ENCODE measurements at regions of chr3 and their contacts with region 1.

Region 1: DNA sequence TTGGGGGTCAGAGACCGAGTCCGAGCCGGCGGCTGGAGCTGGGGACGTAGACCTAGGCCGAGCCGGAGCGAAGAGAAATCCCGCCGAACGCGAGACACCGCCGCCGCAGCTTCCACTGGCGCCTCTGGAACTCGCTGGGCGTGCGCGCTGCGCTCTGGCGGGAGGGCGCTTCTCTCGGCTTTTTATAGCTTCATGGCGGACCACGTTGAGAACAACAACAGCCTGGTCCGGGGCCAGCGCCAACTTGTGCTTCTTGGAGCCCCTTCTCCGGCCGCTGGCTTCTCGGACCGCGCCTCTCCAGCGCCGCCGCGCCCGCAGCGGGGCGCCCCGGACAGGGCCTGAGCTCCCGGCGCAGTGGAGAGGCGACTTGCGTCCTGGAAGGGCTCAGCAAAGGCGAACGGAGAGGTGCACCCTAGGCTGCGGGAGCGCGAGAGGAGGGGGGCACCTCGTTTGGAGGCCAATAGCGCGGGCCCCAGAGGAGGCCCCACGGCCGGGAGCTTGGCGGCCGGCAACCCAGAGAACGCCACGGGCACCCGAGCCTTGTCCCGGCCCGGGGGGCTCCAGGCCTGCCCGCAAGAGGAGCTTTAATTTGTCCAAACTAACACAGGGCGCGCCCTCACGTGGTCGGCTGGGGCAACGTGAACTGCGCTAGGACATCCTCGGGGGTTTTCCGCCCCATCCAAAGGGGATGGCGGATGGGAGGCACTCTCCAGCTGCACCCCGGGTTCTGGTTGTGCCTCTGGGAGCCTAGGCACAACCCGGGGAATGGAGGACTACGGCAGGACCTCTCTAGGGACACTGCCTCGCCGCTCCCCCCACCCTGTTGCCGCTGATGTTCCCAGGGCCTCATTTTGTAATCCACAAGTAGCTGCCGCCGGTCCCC is 37.7 kb downstream of the HMCES start:
- DNase-seq: peak; percentile 79 to 96 (median 89)
- ATAC-seq: peak; percentile 45
- H3K4me3 ChIP-seq: peak overlapping the region; percentile 94 to 98
- H3K4me3 Mint-ChIP-seq: peak overlapping the region; percentile 95
- H3K27ac ChIP-seq: peak overlapping the region; percentile 55 to 84
- H3K27ac Mint-ChIP-seq: peak overlapping the region; percentile 88
- H3K4me1 ChIP-seq: peaks cover 16% of the 10 kb centered on the region
- H3K4me1 Mint-ChIP-seq: peaks cover 25% of the 10 kb centered on the region
- H3K27me3 ChIP-seq: no peaks in the 10 kb centered on the region
- H3K27me3 Mint-ChIP-seq: no peaks in the 10 kb centered on the region
- CTCF ChIP-seq: peak; percentile 68

Region 2: DNA sequence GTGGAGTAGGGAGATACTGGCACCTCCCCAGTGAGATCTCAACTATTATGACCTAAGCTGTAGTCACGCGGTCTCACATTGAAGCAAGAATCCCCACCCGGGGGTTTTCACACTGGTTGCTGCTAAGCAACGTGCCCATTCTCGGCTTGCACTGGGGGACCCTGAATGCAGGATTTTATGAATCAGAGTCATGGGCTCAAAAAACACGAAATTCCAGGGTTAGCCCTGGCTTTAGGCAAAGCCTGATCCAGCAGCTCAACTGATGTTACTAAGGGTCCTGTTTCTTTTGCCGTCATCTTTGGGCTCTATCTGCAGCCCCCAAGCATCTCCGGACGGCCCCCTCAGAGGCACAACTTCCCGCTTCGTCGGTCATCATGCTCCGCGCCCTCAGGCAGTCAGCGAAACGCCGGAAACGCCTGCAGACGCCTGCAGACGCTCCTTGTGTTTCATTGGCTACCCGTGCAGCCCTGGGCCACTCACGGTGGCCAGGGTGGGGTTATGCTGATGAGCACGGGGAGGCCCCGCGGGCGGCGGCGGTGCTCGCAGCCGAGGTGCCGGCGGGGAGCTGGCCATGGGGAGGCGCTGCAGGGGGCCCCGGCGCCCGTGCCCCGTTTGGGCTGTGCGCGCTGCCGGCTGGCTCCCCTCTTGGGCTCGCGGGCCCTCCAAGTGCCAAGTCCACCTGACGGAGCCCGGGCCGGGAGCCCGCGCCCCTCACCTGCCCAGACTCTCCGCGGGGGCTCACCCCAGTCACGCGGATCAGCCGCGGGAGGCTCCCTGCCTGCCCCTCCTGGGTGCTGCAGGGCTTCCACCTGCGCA is 289.4 kb before region 1 on chr3:
- CTCF ChIA-PET with region 1: no interaction called
- POLR2A ChIA-PET with region 1: interaction called, 3 read pairs
- intact Hi-C with region 1: loop called in 1 of 2 experiments (anchors 1 kb)
- DNase-seq: peak; percentile 85 to 98 (median 91)
- ATAC-seq: peak; percentile 98
- H3K4me3 ChIP-seq: peak overlapping the region; percentile 58 to 61
- H3K4me3 Mint-ChIP-seq: peak overlapping the region; percentile 85
- H3K27ac ChIP-seq: peak overlapping the region; percentile 75 to 80
- H3K27ac Mint-ChIP-seq: peak overlapping the region; percentile 99
- H3K4me1 ChIP-seq: peaks cover 22% of the 10 kb centered on the region
- H3K4me1 Mint-ChIP-seq: peaks cover 26% of the 10 kb centered on the region
- H3K27me3 ChIP-seq: no peaks in the 10 kb centered on the region
- H3K27me3 Mint-ChIP-seq: no peaks in the 10 kb centered on the region
- CTCF ChIP-seq: peak; percentile 84

Region 3: DNA sequence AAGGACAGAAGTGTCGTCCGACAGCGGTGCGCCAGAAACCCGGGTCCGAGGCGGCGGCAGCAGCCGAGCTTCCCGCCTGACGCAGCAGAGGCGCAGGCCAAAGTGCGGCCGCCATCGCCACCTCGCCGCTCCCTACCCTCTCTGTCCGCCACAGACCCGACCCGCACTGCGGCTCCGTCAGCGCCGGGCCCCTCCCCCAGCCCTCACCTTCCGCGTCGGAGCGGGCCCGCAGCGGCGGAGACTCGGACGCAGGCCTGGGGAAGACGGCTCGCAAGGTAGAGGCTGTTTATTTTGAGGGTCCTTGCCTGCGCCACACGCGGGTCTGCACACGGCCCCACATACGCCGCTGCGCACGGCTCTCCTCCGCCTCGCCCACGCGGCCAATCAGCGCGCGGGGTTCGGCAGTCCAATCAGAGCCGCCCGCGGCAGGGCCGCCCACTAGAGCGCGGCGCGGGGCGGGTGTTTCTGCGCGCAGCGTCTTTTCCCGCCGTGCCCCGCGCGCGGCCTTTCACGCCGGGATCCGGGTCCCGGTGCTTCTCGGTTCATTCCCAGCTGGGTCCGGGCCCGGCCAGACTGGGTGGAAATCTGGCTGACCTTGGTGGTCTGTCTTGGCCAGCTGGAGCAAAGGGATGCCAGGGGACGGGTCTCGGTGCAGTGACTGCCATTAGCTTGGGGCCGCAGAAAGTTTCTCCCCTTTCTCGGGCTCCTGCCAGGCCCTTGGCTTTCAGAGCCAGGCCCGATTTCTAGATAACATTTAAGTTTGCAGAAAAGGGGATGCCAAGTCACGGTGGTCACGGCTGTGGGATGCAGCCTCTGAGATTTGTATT is 132.6 kb before region 1 on chr3 and contains the start of gene CNBP:
- CTCF ChIA-PET with region 1: no interaction called
- POLR2A ChIA-PET with region 1: interaction called, 4 read pairs
- intact Hi-C with region 1: loop called in 1 of 2 experiments (anchors 1 kb)
- DNase-seq: peak; percentile 80 to 96 (median 92)
- ATAC-seq: peak; percentile 96
- H3K4me3 ChIP-seq: peak within 1 kb of the TSS; percentile 77 to 91
- H3K4me3 Mint-ChIP-seq: peak within 1 kb of the TSS; percentile 97
- H3K27ac ChIP-seq: peak within 1 kb of the TSS; percentile 93 to 99
- H3K27ac Mint-ChIP-seq: peak within 1 kb of the TSS; percentile 99
- H3K4me1 ChIP-seq: peaks cover 33% of the 10 kb centered on the region
- H3K4me1 Mint-ChIP-seq: peaks cover 40% of the 10 kb centered on the region
- H3K27me3 ChIP-seq: no peaks in the 10 kb centered on the region
- H3K27me3 Mint-ChIP-seq: no peaks in the 10 kb centered on the region
- CTCF ChIP-seq: no peak
- total RNA-seq, gene CNBP: 296 to 301 TPM

Region 4: GRCh38 chr3:129278439-129278970 is 37.9 kb before region 1 on chr3 and contains the start of gene HMCES:
- CTCF ChIA-PET with region 1: interaction called, 7 read pairs
- POLR2A ChIA-PET with region 1: interaction called, 49 read pairs
- intact Hi-C with region 1: loop called (anchors 1 kb)
- DNase-seq: peak; percentile 88 to 98 (median 96)
- ATAC-seq: peak; percentile 94
- H3K4me3 ChIP-seq: peak within 1 kb of the TSS; percentile 59 to 92
- H3K4me3 Mint-ChIP-seq: peak within 1 kb of the TSS; percentile 95
- H3K27ac ChIP-seq: peak within 1 kb of the TSS; percentile 88 to 93
- H3K27ac Mint-ChIP-seq: peak within 1 kb of the TSS; percentile 97
- H3K4me1 ChIP-seq: peaks cover 39% of the 10 kb centered on the region
- H3K4me1 Mint-ChIP-seq: peaks cover 42% of the 10 kb centered on the region
- H3K27me3 ChIP-seq: no peaks in the 10 kb centered on the region
- H3K27me3 Mint-ChIP-seq: no peaks in the 10 kb centered on the region
- CTCF ChIP-seq: no peak
- total RNA-seq, gene HMCES: 69.5 to 78.7 TPM

Region 5: DNA sequence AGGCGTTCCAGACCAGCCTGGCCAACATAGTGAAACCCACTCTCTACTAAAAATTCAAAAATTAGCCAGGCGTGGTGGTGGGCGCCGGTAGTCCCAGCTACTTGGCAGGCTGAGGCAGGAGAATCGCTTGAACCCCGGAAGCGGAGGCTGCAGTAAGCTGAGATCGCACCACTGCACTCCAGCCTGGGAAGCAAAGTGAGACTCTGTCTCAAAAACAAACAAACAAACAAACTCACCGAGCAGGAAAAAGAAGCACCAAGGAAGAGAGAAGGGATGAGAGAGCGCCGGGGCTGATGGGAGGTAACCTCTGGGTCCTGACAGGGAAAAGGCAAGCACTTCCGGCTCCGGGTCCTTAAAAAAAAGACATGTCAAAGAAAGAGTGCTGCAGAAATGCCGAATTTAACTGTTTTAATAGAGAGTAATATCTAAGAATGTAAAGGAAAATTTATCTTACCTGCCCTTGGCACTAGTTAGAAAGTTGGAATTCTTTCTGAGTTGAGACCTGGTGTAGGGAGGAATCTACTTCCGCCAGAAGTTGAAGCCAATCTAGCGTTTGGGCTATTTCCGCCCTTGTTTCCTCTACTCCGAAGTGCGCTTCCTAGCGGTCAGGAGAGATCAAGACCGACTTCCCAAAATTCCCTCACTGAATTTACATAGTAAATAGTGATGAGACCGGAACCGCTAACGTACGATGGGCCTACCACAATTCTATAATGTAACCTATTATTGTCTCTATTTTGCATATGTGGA is 82.9 kb after region 1 on chr3:
- CTCF ChIA-PET with region 1: no interaction called
- POLR2A ChIA-PET with region 1: no interaction called
- intact Hi-C with region 1: loop called in 1 of 2 experiments (anchors 5 kb)
- DNase-seq: peak; percentile 40 to 96 (median 73)
- ATAC-seq: peak; percentile 83
- H3K4me3 ChIP-seq: peak overlapping the region; percentile 63 to 72
- H3K4me3 Mint-ChIP-seq: peak overlapping the region; percentile 98
- H3K27ac ChIP-seq: peak overlapping the region; percentile 73 to 88
- H3K27ac Mint-ChIP-seq: peak overlapping the region; percentile 99
- H3K4me1 ChIP-seq: peaks cover 12% of the 10 kb centered on the region
- H3K4me1 Mint-ChIP-seq: peaks cover 42% of the 10 kb centered on the region
- H3K27me3 ChIP-seq: no peaks in the 10 kb centered on the region
- H3K27me3 Mint-ChIP-seq: no peaks in the 10 kb centered on the region
- CTCF ChIP-seq: peak; percentile 78

Region 6: GRCh38 chr3:130111185-130111864 is 795.0 kb after region 1 on chr3:
- CTCF ChIA-PET with region 1: no interaction called
- POLR2A ChIA-PET with region 1: no interaction called
- intact Hi-C with region 1: loop called in 1 of 2 experiments (anchors 10 kb)
- DNase-seq: peak; percentile 97 to 100 (median 99)
- ATAC-seq: peak; percentile 100
- H3K4me3 ChIP-seq: peak overlapping the region; percentile 69 to 89
- H3K4me3 Mint-ChIP-seq: peak overlapping the region; percentile 99
- H3K27ac ChIP-seq: peak overlapping the region; percentile 82 to 95
- H3K27ac Mint-ChIP-seq: peak overlapping the region; percentile 100
- H3K4me1 ChIP-seq: peaks cover 3% of the 10 kb centered on the region
- H3K4me1 Mint-ChIP-seq: peaks cover 28% of the 10 kb centered on the region
- H3K27me3 ChIP-seq: no peaks in the 10 kb centered on the region
- H3K27me3 Mint-ChIP-seq: no peaks in the 10 kb centered on the region
- CTCF ChIP-seq: no peak

Measured in CD8-positive, alpha-beta T cell (primary cell).